Activated CD8-positive, alpha-beta T cell treated with anti-CD3 and anti-CD28 coated beads for 36 hours (primary cell): ENCODE measurements at regions of chr2 and their contacts with region 1.

Region 1: DNA sequence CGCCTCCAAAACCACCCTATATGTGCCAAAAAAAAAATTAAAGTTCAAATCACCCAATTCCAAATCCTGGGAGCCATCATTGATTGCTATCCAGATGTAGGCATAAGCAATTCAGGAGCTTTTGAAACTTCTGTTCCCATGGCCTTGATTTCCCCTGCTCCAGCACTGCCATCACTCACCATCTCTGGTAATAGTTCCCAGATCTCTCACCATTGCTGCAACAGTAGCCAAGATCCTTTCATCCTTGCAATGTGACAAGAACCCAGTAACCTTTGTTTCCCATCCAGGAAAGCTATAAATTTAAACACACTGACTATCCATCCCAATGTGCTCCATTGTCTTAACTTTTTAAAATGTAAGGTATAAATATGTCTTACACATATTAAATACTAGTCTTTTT is 155.4 kb downstream of the PDE11A start:
- DNase-seq: no peak
- ATAC-seq: no peak
- H3K4me3 Mint-ChIP-seq: no peak overlapping the region
- H3K27ac Mint-ChIP-seq: no peak overlapping the region
- H3K4me1 Mint-ChIP-seq: no peaks in the 10 kb centered on the region
- H3K27me3 Mint-ChIP-seq: no peaks in the 10 kb centered on the region
- CTCF ChIP-seq: no peak

Region 2: GRCh38 chr2:177772529-177772928 is 144.6 kb before region 1 on chr2:
- CTCF ChIA-PET with region 1: no interaction called
- POLR2A ChIA-PET with region 1: no interaction called
- intact Hi-C with region 1: no loop called
- DNase-seq: peak; percentile 38
- ATAC-seq: no peak
- H3K4me3 Mint-ChIP-seq: no peak overlapping the region
- H3K27ac Mint-ChIP-seq: no peak overlapping the region
- H3K4me1 Mint-ChIP-seq: no peaks in the 10 kb centered on the region
- H3K27me3 Mint-ChIP-seq: peaks cover 1% of the 10 kb centered on the region
- CTCF ChIP-seq: peak; percentile 77

Region 3: GRCh38 chr2:177906041-177906718 is 11.0 kb before region 1 on chr2:
- CTCF ChIA-PET with region 1: interaction called, 15 read pairs
- POLR2A ChIA-PET with region 1: no interaction called
- intact Hi-C with region 1: no loop called
- DNase-seq: peak; percentile 79
- ATAC-seq: peak; percentile 97
- H3K4me3 Mint-ChIP-seq: no peak overlapping the region
- H3K27ac Mint-ChIP-seq: no peak overlapping the region
- H3K4me1 Mint-ChIP-seq: peaks cover 2% of the 10 kb centered on the region
- H3K27me3 Mint-ChIP-seq: peaks cover 4% of the 10 kb centered on the region
- CTCF ChIP-seq: peak; percentile 75